ENCODE measurements at regions of chr12 and their contacts with region 1.

Region 1: DNA sequence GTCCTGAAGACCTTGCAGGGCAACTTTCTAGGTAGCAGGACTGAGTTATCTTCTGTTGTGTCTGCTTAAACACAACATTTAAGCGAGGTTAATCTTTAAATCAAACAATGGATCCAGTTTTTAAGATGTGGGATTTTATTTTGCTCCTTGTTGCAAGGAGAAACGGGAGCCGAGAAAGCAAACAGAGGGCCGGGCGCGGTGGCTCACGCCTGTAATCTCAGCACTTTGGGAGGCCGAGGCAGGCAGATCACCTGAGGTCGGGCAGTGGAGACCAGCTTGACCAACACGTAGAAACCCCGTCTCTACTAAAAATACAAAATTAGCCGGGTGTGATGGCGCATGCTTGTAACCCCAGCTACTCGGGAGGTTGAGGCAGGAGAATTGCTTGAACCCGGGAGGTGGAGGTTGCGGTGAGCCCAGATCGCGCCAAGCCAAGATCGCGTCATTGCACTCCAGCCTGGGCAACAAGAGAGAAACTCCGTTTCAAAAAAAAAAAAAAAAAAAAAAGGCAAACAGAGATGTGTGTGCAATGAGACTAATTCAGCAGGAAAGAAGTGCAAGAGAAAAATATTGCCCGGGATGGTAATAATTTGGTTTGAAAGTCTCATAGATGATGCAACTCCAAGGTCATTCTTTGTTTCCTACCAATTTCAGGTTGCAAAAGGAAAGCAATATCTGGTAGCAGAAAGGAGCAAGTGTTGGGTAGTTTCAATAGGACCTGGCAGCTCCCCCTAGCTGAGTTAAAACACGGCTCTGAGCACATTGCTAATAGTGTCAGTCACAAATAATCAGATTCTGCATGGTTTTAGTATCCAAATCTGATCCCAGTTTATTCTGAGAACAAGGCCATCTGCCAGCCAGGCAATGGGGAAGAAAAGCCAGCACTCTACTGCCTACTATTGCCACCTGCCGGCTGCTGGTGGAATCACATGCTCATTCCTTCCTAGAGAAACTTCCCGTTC is 141.4 kb downstream of the PPM1H start:
- DNase-seq: peak; percentile 75 to 94 (median 88)
- H3K4me3 ChIP-seq: peak overlapping the region in 36 of 59 donors; percentile 2 to 46 (median 22)
- H3K27ac ChIP-seq: peak overlapping the region in 58 of 59 donors; percentile 2 to 80 (median 64)
- H3K27me3 ChIP-seq: no peaks in the 10 kb centered on the region
- CTCF ChIP-seq: peak; percentile 96 to 100 (median 99)

Region 2: DNA sequence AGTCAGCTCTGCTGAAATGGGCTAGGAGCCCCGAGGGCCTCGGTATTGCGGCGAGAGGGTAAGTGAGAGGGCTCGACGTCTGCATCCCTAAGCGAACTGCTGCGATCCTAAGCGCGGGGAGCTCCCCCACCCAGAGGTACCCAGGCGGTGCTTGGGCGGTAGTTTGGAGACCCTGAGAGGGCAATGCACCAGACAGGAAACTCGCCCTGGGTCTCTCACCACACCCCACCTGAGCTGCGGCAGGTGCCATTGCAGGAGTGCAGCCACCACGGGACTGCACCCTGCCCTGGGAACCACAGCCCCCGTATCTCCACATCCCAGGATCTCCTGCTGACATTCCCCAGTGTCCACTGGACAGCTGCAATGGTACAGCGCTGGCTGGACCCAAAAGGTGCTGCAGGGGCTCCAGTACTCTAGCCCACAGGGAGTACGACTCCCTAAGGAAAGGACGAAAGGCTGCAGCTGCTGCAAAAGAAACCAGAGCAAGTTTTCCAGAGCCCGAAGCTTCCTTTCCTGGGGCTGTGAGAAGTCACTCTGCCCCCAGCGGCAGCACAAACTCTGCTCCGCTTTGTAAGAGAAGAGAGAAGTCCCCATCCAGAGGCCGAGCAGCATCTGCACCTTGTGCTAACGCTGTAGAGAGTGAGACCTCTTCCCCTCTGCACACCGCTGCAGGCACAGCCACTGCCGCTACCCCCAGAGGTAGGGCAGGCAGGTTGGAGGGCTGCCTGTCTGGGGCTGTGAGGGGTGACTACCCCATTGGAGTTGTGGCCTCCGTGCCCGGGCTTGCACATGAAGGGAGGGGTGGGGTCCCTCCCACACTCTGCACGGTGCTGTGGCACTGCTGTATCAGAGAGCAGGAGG is 358.0 kb before region 1 on chr12:
- intact Hi-C with region 1: loop called (anchors 2 to 5 kb)
- DNase-seq: peak; percentile 5 to 73 (median 60)
- H3K4me3 ChIP-seq: peak overlapping the region; percentile 36 to 82 (median 63)
- H3K27ac ChIP-seq: peak overlapping the region in 1 of 59 donors; percentile 19
- H3K27me3 ChIP-seq: peaks cover 0 to 20% (median 0%) of the 10 kb centered on the region in 45 donors
- CTCF ChIP-seq: peak in 55 of 56 donors; percentile 16 to 69 (median 53)

Region 3: GRCh38 chr12:62581288-62582064 is 212.1 kb before region 1 on chr12:
- intact Hi-C with region 1: loop called (anchors 2 to 5 kb)
- DNase-seq: no peak
- H3K4me3 ChIP-seq: no peak overlapping the region
- H3K27ac ChIP-seq: peak overlapping the region in 35 of 59 donors; percentile 3 to 83 (median 39)
- H3K27me3 ChIP-seq: no peaks in the 10 kb centered on the region
- CTCF ChIP-seq: peak; percentile 39 to 89 (median 76)

Region 4: GRCh38 chr12:62714774-62715721 is 78.5 kb before region 1 on chr12:
- intact Hi-C with region 1: loop called (anchors 5 to 10 kb)
- DNase-seq: peak in 8 of 10 donors; percentile 33 to 63 (median 50)
- H3K4me3 ChIP-seq: peak overlapping the region in 8 of 59 donors; percentile 2 to 39 (median 15)
- H3K27ac ChIP-seq: peak overlapping the region in 58 of 59 donors; percentile 5 to 96 (median 76)
- H3K27me3 ChIP-seq: no peaks in the 10 kb centered on the region
- CTCF ChIP-seq: peak in 1 of 56 donors; percentile 11

Region 5: GRCh38 chr12:62910576-62911041 is 117.1 kb after region 1 on chr12:
- intact Hi-C with region 1: no loop called
- DNase-seq: no peak
- H3K4me3 ChIP-seq: no peak overlapping the region
- H3K27ac ChIP-seq: peak overlapping the region in 6 of 59 donors; percentile 22 to 46 (median 34)
- H3K27me3 ChIP-seq: no peaks in the 10 kb centered on the region
- CTCF ChIP-seq: no peak